H1 (cell line): ENCODE measurements at regions of chr22 and their contacts with region 1.

Region 1: DNA sequence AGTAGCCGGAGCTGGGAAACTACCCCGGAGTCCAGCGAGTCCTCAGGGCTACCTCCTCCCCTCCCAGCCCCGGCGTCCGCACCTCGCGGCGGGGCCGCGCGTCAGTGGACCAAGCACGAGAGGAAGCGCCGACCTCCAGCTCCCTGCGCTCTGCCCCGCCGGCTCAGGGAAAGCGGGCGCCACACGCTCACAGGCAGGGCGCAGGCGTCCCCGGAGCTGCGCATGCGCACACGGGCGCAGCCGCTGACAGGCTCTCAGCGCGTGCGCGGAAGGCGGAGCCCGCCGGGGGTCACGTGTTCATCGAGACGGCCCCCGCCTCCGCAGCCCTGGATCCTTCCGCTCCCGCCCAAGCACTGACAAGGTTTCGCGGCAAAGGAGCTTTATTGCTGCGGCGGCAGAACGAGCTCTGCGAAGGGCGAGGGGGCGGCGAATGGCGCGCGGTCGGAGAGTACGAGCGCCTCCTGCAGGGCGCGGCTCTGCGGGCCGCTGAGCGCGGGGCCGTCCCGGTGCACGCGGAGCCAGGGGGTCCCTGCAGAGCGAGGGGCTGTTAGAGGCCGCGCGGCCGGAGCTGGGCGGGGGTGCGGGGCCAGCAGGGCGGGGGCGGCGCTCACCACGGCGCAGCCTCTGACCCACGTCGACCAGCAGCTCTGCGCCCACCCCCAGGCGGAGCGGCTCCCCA is at the start of gene SCO2:
- DNase-seq: peak; percentile 89 to 96
- H3K4me3 ChIP-seq: peak within 1 kb of the TSS; percentile 63 to 78 (median 67)
- H3K27ac ChIP-seq: no peak within 1 kb of the TSS; the same call in 1 of the 2 replicates
- H3K4me1 ChIP-seq: peaks cover 0 to 16% (median 7%) of the 10 kb centered on the region in 4 experiments; a peak in 5 of 7 replicates
- H3K27me3 ChIP-seq: peaks cover 23 to 39% (median 33%) of the 10 kb centered on the region in 4 experiments
- CTCF ChIP-seq: peak; percentile 49 to 61 (median 52)
- EP300 ChIP-seq: no peak
- POLR2A ChIP-seq: 0 out of 3 replicates have a peak, but pooled peaks of 1 of the 2 experiments have one; percentile 33
- RAD21 ChIP-seq: peak; percentile 32 to 51; a peak in 3 of 4 replicates
- total RNA-seq, gene SCO2: 2.2 TPM in 1 of 2 replicates, not detected in the other

Region 2: DNA sequence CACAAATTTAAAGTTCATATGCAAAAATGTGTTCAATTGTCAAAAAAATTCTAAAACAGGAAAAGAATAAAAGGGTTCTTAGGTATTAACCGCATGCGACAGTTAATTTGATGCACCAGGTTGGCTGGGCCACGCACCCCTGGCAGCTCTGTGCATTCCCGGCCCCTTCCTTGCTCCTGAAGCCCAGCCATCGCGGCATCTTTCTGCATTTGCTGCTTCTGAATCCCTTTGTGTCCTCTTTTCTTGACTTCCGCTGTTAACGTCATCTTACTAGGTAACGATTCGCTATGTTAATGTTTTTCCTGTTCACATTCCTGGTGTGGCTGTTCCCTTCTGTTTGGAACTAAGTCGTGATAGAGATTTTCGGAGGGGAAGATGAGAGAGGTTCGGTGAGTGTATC is 12.2 kb after region 1 on chr22:
- CTCF ChIA-PET with region 1: interaction called, 36 read pairs
- POLR2A ChIA-PET with region 1: interaction called, 3 read pairs
- DNase-seq: no peak
- H3K4me3 ChIP-seq: no peak overlapping the region
- H3K27ac ChIP-seq: no peak overlapping the region
- H3K4me1 ChIP-seq: no peaks in the 10 kb centered on the region
- H3K27me3 ChIP-seq: peaks cover 1 to 8% (median 6%) of the 10 kb centered on the region in 4 experiments; a peak in 6 of 7 replicates
- CTCF ChIP-seq: no peak
- EP300 ChIP-seq: no peak
- POLR2A ChIP-seq: no peak
- RAD21 ChIP-seq: no peak

Region 3: DNA sequence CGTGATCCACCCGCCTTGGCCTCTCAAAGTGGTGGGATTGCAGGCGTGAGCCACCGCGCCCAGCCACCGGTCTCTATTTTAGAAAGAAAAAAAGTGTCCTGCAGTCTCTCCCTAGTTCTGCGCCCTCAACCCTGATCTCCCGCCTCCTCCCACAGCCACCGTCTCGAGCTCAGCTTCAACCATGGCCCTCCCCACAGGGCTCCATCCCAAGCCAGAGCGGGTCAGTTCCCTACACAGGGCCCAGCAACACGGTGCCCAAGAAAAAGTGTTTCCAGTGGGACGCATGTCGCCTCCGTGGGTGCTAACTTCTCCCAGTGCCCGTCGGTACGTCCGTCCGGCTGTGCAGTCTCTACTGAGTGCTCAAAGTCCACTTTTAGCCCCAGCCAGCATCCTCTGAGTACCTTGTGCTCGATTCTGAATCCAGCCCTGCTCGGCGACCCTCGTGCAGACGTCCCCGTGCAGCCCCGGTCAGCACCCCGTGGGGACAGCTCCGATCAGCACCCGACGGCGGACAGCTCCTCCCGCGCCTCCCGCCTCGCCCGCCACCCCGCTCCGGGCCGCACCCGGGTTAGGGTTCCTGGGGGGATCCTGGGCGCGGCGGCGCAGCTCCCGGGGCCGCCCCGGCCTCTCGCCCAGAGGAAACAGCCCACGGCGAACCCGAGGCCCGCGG is 74.4 kb after region 1 on chr22:
- CTCF ChIA-PET with region 1: no interaction called
- POLR2A ChIA-PET with region 1: no interaction called
- DNase-seq: peak in 1 of 2 experiments; percentile 92
- H3K4me3 ChIP-seq: no peak overlapping the region; a peak in 2 of 8 replicates
- H3K27ac ChIP-seq: no peak overlapping the region
- H3K4me1 ChIP-seq: peaks cover 0 to 16% (median 4%) of the 10 kb centered on the region in 4 experiments; a peak in 5 of 7 replicates
- H3K27me3 ChIP-seq: peaks cover 50 to 73% (median 54%) of the 10 kb centered on the region in 4 experiments; a peak in 6 of 7 replicates
- CTCF ChIP-seq: no peak
- EP300 ChIP-seq: no peak
- POLR2A ChIP-seq: no peak
- RAD21 ChIP-seq: 0 out of 4 replicates have a peak, but pooled peaks of 1 of the 2 experiments have one; percentile 1

Region 4: GRCh38 chr22:50705208-50705691 is 179.7 kb after region 1 on chr22:
- CTCF ChIA-PET with region 1: no interaction called
- POLR2A ChIA-PET with region 1: no interaction called
- DNase-seq: peak; percentile 44 to 87
- H3K4me3 ChIP-seq: peak overlapping the region in 2 of 4 experiments; percentile 10 to 49; a peak in 4 of 8 replicates
- H3K27ac ChIP-seq: no peak overlapping the region
- H3K4me1 ChIP-seq: peaks cover 0 to 8% (median 3%) of the 10 kb centered on the region in 4 experiments; a peak in 4 of 7 replicates
- H3K27me3 ChIP-seq: no peaks in the 10 kb centered on the region
- CTCF ChIP-seq: no peak
- EP300 ChIP-seq: no peak
- POLR2A ChIP-seq: no peak
- RAD21 ChIP-seq: no peak

Region 5: DNA sequence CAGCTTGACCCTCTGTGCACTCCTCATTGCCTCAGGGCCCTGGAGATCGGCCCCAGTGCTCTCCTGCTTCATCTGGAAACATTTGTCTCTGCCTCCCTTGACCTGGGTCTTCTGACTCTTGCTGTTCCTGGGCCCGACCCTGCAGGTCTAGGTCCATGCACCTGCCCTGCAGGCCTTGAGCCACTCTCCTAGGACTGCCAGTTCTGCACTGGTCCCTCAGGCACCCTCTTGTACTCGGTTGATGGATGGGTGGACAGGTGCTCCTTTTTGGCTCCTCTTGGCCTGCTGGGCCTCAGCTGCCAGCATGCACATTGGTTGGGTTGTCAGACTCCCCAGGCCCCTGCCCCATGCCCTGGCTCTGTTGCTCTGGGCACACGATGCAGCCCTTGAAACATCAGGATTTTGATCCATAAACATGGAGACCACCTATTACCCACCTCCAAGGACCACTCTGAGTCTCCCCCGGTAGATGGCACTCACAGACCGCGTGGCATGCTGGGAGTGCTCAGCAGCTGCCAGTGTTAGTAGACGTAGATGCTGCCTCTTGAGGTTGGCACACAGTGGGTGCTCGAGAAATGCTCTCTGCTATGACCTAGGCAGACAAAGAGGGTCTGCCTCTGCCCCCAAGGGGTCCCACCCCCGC is 192.3 kb after region 1 on chr22:
- CTCF ChIA-PET with region 1: no interaction called
- POLR2A ChIA-PET with region 1: no interaction called
- DNase-seq: no peak
- H3K4me3 ChIP-seq: no peak overlapping the region
- H3K27ac ChIP-seq: no peak overlapping the region
- H3K4me1 ChIP-seq: peaks cover 0 to 6% (median 0%) of the 10 kb centered on the region in 4 experiments; a peak in 2 of 7 replicates
- H3K27me3 ChIP-seq: peaks cover 31 to 51% (median 44%) of the 10 kb centered on the region in 4 experiments
- CTCF ChIP-seq: peak; percentile 4 to 15 (median 11); a peak in 2 of 4 replicates
- EP300 ChIP-seq: no peak
- POLR2A ChIP-seq: no peak
- RAD21 ChIP-seq: peak; percentile 37 to 49